CD8-positive, alpha-beta T cell (primary cell): ENCODE measurements at regions of chr3 and their contacts with region 1.

Region 1: GRCh38 chr3:77479021-77479420 is 439.1 kb downstream of the ROBO2 start:
- DNase-seq: no peak
- ATAC-seq: no peak
- H3K4me3 ChIP-seq: no peak overlapping the region
- H3K4me3 Mint-ChIP-seq: no peak overlapping the region
- H3K27ac ChIP-seq: no peak overlapping the region
- H3K27ac Mint-ChIP-seq: no peak overlapping the region
- H3K4me1 ChIP-seq: no peaks in the 10 kb centered on the region
- H3K4me1 Mint-ChIP-seq: no peaks in the 10 kb centered on the region
- H3K27me3 ChIP-seq: no peaks in the 10 kb centered on the region
- H3K27me3 Mint-ChIP-seq: no peaks in the 10 kb centered on the region
- CTCF ChIP-seq: no peak

Region 2: DNA sequence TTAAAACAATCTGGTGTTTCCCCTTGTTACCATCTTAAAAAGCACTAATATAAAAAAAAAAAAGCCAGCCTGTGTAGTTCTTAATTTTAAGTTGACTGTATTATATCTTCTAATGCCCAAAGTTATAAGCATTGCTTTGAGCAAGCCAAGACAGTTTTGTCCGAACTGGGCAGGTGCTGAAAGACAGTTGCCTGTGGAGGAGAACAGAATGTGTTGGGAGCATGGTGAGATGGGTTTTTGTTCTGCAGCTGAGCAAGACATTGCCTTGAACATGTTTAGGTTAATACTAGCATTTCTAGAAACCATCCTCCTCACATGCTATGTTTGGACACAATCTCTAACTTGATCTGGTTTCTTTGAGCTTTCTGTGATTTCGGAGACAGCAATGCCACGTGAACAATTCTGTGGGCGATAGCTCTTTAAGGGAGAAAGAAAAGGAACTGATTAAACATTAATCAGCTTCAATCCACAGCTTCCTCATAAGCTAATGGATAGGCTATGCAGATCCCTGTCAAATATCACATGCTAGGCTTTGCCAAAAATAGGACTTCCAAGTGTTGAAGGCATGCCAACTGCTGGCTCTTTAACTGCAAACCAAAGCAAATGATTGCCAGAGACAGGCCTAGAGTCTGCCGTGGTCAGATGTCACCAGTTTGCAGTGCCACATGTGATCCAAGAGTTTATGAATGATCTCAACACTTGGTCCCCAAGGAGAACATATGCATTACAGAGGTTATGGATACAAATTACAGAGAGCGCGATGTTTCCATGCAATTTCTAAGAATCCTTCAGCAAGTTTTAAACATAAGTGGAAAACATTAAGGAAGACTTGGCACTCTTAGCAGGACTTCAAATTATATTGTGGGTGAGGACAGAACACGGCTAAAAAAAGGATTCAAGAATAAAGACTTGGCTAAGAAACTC is 11.1 kb before region 1 on chr3:
- CTCF ChIA-PET with region 1: no interaction called
- POLR2A ChIA-PET with region 1: no interaction called
- intact Hi-C with region 1: no loop called
- DNase-seq: no peak
- ATAC-seq: no peak
- H3K4me3 ChIP-seq: no peak overlapping the region
- H3K4me3 Mint-ChIP-seq: no peak overlapping the region
- H3K27ac ChIP-seq: no peak overlapping the region
- H3K27ac Mint-ChIP-seq: no peak overlapping the region
- H3K4me1 ChIP-seq: no peaks in the 10 kb centered on the region
- H3K4me1 Mint-ChIP-seq: no peaks in the 10 kb centered on the region
- H3K27me3 ChIP-seq: no peaks in the 10 kb centered on the region
- H3K27me3 Mint-ChIP-seq: no peaks in the 10 kb centered on the region
- CTCF ChIP-seq: no peak

Region 3: DNA sequence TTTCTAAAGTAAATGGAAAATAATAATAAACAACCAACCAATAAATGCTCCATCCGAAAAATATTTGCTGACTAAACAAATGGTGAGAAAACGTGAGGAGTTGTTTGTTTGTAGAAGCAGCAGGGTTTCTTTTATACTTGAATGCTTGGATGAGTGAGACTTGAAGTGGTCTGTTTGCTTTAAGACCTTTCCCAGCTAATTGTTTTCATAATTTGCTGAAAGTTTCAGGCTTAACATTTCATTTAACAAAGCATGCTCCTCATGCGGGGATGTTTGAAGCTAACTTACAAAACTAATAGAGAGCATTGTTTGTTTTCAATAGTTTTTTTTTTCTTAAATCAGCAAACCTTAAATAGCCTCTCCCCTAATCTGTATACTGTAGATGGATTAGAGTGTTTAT is 45.4 kb after region 1 on chr3:
- CTCF ChIA-PET with region 1: no interaction called
- POLR2A ChIA-PET with region 1: no interaction called
- intact Hi-C with region 1: loop called in 1 of 2 experiments (anchors 1 kb)
- DNase-seq: no peak
- ATAC-seq: no peak
- H3K4me3 ChIP-seq: no peak overlapping the region
- H3K4me3 Mint-ChIP-seq: no peak overlapping the region
- H3K27ac ChIP-seq: no peak overlapping the region
- H3K27ac Mint-ChIP-seq: no peak overlapping the region
- H3K4me1 ChIP-seq: no peaks in the 10 kb centered on the region
- H3K4me1 Mint-ChIP-seq: no peaks in the 10 kb centered on the region
- H3K27me3 ChIP-seq: no peaks in the 10 kb centered on the region
- H3K27me3 Mint-ChIP-seq: no peaks in the 10 kb centered on the region
- CTCF ChIP-seq: no peak